Heart right ventricle (tissue), 16 donors: ENCODE measurements at regions of chr5 and their contacts with region 1.

Region 1: DNA sequence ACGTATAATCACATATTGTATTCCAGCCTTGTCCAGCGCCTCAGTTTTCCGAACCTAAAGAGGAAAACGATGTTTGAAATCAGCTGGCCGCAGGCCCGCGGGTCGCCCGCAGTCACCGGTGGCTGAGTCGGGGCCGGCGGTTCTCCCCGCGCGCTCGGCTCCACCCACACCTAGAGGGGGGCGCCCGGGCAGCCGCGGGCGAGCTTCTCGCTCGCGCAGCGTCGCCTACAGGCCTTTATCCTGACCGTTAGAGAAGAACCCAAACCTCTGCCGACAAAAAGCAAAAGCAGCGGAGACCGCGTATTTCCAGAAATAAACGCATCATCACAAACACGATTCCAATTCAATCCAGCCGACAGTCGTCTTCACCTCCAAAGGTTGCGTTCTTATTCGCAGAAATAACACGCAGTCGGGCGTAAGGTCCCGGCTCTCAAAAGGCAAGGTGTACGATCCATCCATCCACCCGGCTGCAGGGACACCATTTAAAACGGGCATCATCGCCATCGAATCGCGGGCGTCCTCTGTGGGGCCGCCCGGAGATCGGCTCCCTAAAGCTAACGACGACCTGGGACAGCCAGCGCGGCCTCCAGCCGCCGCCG is 680 bp upstream of the NIPBL start:
- DNase-seq: peak; percentile 80 to 83
- ATAC-seq: peak; percentile 83 to 92 (median 90)
- H3K4me3 ChIP-seq: peak overlapping the region; percentile 66 to 97 (median 88)
- H3K27ac ChIP-seq: peak overlapping the region; percentile 91 to 99 (median 98)
- H3K4me1 ChIP-seq: peaks cover 0 to 59% (median 49%) of the 10 kb centered on the region in 9 donors
- H3K27me3 ChIP-seq: no peaks in the 10 kb centered on the region
- CTCF ChIP-seq: peak; percentile 21 to 81 (median 54)

Region 2: DNA sequence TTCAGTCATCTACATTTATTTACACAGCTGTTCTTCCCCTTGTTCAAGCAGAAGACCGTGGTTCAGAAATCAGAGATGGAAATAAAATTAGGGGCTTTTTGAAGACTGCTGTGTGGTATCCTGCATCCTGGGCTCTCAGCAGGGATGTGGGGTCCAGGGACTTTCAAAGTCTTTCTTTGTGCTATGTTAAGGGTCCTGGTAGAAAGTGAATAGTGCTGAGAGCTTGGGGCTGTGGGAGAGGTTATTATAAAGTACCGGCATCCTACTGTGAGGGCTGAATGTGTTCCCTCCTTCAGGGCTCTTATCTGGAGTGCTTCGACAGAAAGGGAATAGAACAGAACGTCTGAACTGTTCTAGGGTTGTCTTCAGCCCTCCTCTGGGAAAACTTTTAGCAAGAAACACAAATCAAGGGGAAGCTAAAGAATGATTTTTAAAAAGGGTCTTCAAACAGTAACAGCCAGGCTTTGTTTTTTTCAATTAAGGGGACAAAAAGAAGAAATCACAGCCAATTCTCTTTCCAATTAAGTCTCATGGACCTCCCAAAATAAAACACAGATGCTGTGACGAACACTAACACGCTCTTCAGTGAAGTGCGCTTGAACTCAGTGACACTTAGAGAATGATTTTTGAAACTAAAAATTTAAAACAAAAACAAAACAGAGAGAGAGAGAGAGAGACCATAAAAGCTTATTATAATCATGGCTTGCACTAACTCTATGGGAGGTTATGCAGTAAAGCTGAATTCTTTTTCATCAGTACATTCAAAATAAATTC is 285.2 kb before region 1 on chr5:
- intact Hi-C with region 1: no loop called
- DNase-seq: no peak
- ATAC-seq: peak in 5 of 8 donors; percentile 69 to 94 (median 84)
- H3K4me3 ChIP-seq: no peak overlapping the region
- H3K27ac ChIP-seq: no peak overlapping the region
- H3K4me1 ChIP-seq: peaks cover 0 to 13% (median 6%) of the 10 kb centered on the region in 9 donors
- H3K27me3 ChIP-seq: no peaks in the 10 kb centered on the region
- CTCF ChIP-seq: no peak

Region 3: GRCh38 chr5:36751886-36752285 is 124.0 kb before region 1 on chr5:
- intact Hi-C with region 1: no loop called
- DNase-seq: no peak
- ATAC-seq: no peak
- H3K4me3 ChIP-seq: no peak overlapping the region
- H3K27ac ChIP-seq: no peak overlapping the region
- H3K4me1 ChIP-seq: no peaks in the 10 kb centered on the region
- H3K27me3 ChIP-seq: peaks cover 0 to 12% (median 0%) of the 10 kb centered on the region in 7 donors
- CTCF ChIP-seq: no peak

Region 4: GRCh38 chr5:36778336-36778735 is 97.6 kb before region 1 on chr5:
- intact Hi-C with region 1: no loop called
- DNase-seq: no peak
- ATAC-seq: no peak
- H3K4me3 ChIP-seq: no peak overlapping the region
- H3K27ac ChIP-seq: no peak overlapping the region
- H3K4me1 ChIP-seq: peaks cover 0 to 5% (median 0%) of the 10 kb centered on the region in 9 donors
- H3K27me3 ChIP-seq: peaks cover 0 to 8% (median 0%) of the 10 kb centered on the region in 7 donors
- CTCF ChIP-seq: no peak

Region 5: DNA sequence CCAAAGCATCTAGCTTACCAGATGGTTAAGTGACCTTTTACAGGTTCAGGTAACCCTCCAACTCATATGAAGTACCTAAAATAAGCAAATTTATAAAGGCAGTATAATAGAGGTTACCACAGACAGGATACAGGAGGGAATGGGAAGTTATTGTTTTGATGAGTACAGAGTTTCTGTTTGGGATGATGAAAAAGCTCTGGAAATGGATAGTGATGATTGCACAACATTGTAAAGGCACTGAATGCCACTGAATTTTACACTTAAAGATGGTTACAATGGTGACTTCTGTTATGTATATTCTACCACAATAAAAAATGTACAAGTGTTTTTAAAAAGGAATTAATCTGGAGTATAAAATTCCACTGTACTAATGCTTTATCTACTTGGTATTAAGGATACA is 74.4 kb before region 1 on chr5:
- intact Hi-C with region 1: no loop called
- DNase-seq: no peak
- ATAC-seq: no peak
- H3K4me3 ChIP-seq: no peak overlapping the region
- H3K27ac ChIP-seq: no peak overlapping the region
- H3K4me1 ChIP-seq: no peaks in the 10 kb centered on the region
- H3K27me3 ChIP-seq: peaks cover 0 to 4% (median 0%) of the 10 kb centered on the region in 7 donors
- CTCF ChIP-seq: no peak

Region 6: DNA sequence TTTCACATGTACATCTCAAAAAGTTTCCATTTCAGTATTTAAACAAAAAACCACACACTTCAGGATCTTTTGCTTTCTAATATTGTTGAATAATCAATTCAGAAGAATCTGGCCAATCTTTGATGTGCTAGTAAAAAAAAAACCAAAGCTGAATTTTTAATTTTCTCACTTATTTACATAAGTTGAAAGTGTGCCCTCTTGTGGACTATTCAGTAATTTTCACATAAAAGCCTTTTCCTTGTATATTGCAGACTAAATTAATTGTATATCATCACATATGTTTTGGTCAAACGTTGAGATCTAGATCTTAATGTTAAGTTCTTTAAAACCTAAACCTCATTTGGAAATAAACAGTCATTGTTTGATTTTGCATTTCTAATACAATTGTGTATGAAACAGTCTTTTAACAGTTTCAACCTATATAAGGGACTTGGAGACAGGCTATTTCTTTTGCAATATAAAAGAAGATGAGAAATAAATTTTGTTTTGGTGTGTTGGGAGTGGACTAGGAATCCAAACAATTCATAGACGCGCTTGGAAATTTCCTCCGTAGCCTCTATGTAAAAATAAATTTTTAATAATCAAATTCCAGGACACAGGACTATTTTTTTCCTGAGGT is 68.8 kb after region 1 on chr5:
- intact Hi-C with region 1: loop called in 7 of 10 experiments (anchors 2 to 10 kb)
- DNase-seq: no peak
- ATAC-seq: no peak
- H3K4me3 ChIP-seq: no peak overlapping the region
- H3K27ac ChIP-seq: no peak overlapping the region
- H3K4me1 ChIP-seq: peaks cover 5 to 74% (median 52%) of the 10 kb centered on the region in 9 donors
- H3K27me3 ChIP-seq: no peaks in the 10 kb centered on the region
- CTCF ChIP-seq: peak; percentile 33 to 75 (median 64)